ENCODE measurements at regions of chr15 and their contacts with region 1.

Region 1: GRCh38 chr15:68559345-68560310 is 19.2 kb upstream of the CORO2B start:
- DNase-seq: no peak
- H3K4me3 ChIP-seq: peak overlapping the region; percentile 41
- H3K27me3 ChIP-seq: no peaks in the 10 kb centered on the region
- CTCF ChIP-seq: peak; percentile 93

Region 2: GRCh38 chr15:68252925-68253534 is 306.6 kb before region 1 on chr15:
- CTCF ChIA-PET with region 1: interaction called, 13 read pairs
- POLR2A ChIA-PET with region 1: no interaction called
- DNase-seq: no peak
- H3K4me3 ChIP-seq: no peak overlapping the region
- H3K27me3 ChIP-seq: no peaks in the 10 kb centered on the region
- CTCF ChIP-seq: peak; percentile 85

Region 3: DNA sequence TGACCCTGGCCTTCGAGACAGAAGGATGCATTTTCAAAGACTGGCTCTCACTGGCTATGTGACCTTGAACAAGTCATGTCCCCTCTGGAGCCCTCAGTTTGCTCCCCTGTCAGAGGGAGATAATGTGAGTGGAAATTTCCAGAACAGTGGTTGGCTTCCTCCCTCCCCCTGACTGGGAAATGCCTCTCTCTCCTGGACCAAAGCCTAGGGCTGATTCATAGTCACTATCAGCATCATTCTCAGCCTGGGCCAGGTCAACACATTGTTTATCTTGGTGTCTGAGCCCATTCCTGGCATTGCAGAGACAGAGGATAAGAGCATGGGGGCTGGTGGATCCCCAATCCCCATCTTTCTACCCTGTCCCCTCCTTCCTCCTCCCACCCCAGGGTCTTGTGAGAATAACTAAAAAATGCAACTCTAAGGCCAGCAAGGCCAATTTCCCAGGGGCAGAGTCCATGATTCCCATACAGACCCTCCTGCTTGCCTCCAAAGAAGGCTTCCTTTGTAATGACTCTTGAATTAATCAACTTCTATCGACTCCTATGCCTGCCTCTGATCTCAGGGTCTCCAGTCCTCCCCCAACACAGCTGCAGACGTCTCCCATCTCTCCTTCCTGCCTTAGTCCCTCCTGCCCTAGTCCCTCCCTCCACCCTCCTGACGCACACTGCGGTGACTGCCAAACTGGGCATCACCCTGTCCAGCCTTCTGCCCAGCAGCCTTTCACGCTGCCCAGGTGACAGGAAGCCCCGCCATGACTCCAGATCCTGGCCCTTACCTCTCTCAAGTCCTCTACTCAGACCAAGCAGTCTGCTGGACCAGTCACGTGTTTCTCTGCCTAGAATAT is 16.2 kb before region 1 on chr15:
- CTCF ChIA-PET with region 1: interaction called, 15 read pairs
- POLR2A ChIA-PET with region 1: no interaction called
- DNase-seq: peak; percentile 63
- H3K4me3 ChIP-seq: no peak overlapping the region
- H3K27me3 ChIP-seq: no peaks in the 10 kb centered on the region
- CTCF ChIP-seq: no peak

Region 4: GRCh38 chr15:68672781-68673205 is 113.2 kb after region 1 on chr15:
- CTCF ChIA-PET with region 1: interaction called, 153 read pairs
- POLR2A ChIA-PET with region 1: interaction called, 4 read pairs
- DNase-seq: no peak
- H3K4me3 ChIP-seq: no peak overlapping the region
- H3K27me3 ChIP-seq: no peaks in the 10 kb centered on the region
- CTCF ChIP-seq: peak; percentile 39

Region 5: GRCh38 chr15:68875377-68876116 is 315.9 kb after region 1 on chr15:
- CTCF ChIA-PET with region 1: interaction called, 61 read pairs
- POLR2A ChIA-PET with region 1: no interaction called
- DNase-seq: peak; percentile 39
- H3K4me3 ChIP-seq: peak overlapping the region; percentile 12
- H3K27me3 ChIP-seq: peaks cover 4% of the 10 kb centered on the region
- CTCF ChIP-seq: peak; percentile 84